Endothelial cell of umbilical vein (primary cell): ENCODE measurements at regions of chr1 and their contacts with region 1.

Region 1: GRCh38 chr1:61741711-61742619 is at the start of gene PATJ:
- DNase-seq: peak; percentile 28
- H3K4me3 ChIP-seq: peak within 1 kb of the TSS; percentile 21 to 76 (median 47)
- H3K27ac ChIP-seq: peak within 1 kb of the TSS; percentile 40
- H3K4me1 ChIP-seq: no peaks in the 10 kb centered on the region
- H3K27me3 ChIP-seq: no peaks in the 10 kb centered on the region
- CTCF ChIP-seq: no peak
- POLR2A ChIP-seq: no peak
- total RNA-seq, gene PATJ: 3.0 and 4.2 TPM in 2 replicates

Region 2: DNA sequence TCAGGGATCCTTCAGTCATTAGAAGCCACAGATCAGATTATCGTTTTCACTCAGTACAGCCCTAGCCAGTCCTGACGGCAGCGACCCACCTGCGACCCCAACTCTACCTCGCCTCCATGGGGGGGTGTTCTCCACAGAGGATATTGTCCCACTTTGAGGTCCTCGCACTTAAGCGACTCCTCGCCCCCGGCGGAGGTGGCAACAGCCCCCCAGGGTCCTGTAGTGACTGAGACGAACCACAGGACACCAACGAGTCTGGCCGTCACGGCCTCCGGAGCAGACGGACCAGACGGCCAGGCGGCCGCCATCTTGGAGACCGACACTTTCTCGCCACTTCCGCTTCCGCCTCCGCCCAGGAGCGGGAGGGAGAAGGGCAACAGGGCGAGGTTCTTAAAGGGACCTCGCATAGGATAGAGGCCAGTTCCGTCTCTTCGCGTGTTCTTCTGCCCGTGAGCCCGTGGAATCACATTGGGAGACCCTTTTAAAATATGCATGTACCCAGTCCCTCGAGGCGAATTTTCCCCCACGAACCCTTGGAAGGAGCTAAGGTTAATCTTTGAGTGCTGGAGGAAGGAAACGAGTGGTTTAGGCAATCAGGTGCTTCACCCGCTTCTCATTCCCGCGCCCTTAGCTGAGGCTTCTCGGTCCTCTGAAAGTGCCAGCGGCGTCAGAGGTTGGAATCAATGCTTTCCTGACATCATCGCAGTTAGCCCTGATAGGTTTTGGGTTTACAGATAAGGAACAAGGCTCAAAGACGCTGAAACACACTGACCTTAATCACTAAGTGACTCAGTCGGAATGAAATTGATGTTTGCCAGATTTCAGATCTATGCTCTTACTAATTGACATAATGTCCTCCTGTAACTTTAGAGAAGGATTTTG is 16.9 kb before region 1 on chr1 and contains the start of gene TM2D1:
- CTCF ChIA-PET with region 1: interaction called, 5 read pairs
- POLR2A ChIA-PET with region 1: interaction called, 6 read pairs
- dilution Hi-C with region 1: no loop called
- intact Hi-C with region 1: loop called (anchors 1 kb)
- DNase-seq: peak; percentile 88
- H3K4me3 ChIP-seq: peak within 1 kb of the TSS; percentile 81 to 97 (median 87)
- H3K27ac ChIP-seq: peak within 1 kb of the TSS; percentile 97
- H3K4me1 ChIP-seq: peaks cover 18% of the 10 kb centered on the region
- H3K27me3 ChIP-seq: no peaks in the 10 kb centered on the region
- CTCF ChIP-seq: no peak
- POLR2A ChIP-seq: peak; percentile 99
- total RNA-seq, gene TM2D1: 37.5 and 46.1 TPM in 2 replicates

Region 3: GRCh38 chr1:62022382-62022983 is 280.5 kb after region 1 on chr1:
- CTCF ChIA-PET with region 1: no interaction called
- POLR2A ChIA-PET with region 1: no interaction called
- dilution Hi-C with region 1: no loop called
- intact Hi-C with region 1: no loop called
- DNase-seq: no peak
- H3K4me3 ChIP-seq: no peak overlapping the region
- H3K27ac ChIP-seq: no peak overlapping the region
- H3K4me1 ChIP-seq: no peaks in the 10 kb centered on the region
- H3K27me3 ChIP-seq: no peaks in the 10 kb centered on the region
- CTCF ChIP-seq: no peak
- POLR2A ChIP-seq: no peak